Esophagus muscularis mucosa (tissue), 4 donors: ENCODE measurements at regions of chr14 and their contacts with region 1.

Region 1: GRCh38 chr14:91323671-91324605 is 79.4 kb upstream of the GPR68 start:
- DNase-seq: peak; percentile 97
- H3K4me3 ChIP-seq: peak overlapping the region; percentile 16 to 47 (median 35)
- H3K27ac ChIP-seq: peak overlapping the region; percentile 34 to 67 (median 52)
- H3K4me1 ChIP-seq: peaks cover 23 to 56% (median 29%) of the 10 kb centered on the region in 4 donors
- H3K27me3 ChIP-seq: peaks cover 0 to 4% (median 0%) of the 10 kb centered on the region in 4 donors
- CTCF ChIP-seq: peak in 2 of 3 experiments; percentile 93
- EP300 ChIP-seq: no peak
- POLR2A ChIP-seq: no peak

Region 2: GRCh38 chr14:91418387-91419043 is 94.6 kb after region 1 on chr14:
- intact Hi-C with region 1: loop called (anchors 2 kb)
- DNase-seq: no peak
- H3K4me3 ChIP-seq: peak overlapping the region; percentile 56 to 72 (median 59)
- H3K27ac ChIP-seq: peak overlapping the region; percentile 11 to 48 (median 32)
- H3K4me1 ChIP-seq: peaks cover 13 to 24% (median 22%) of the 10 kb centered on the region in 4 donors
- H3K27me3 ChIP-seq: peaks cover 0 to 27% (median 3%) of the 10 kb centered on the region in 4 donors
- CTCF ChIP-seq: peak in 2 of 3 experiments; percentile 94 to 96
- EP300 ChIP-seq: no peak
- POLR2A ChIP-seq: no peak